MCF 10A (cell line): ENCODE measurements at regions of chr1 and their contacts with region 1.

Region 1: GRCh38 chr1:68120136-68120791 is 69.8 kb upstream of the DIRAS3 start:
- DNase-seq: peak; percentile 71
- H3K4me3 Mint-ChIP-seq: no peak overlapping the region
- H3K27ac Mint-ChIP-seq: no peak overlapping the region
- H3K4me1 Mint-ChIP-seq: peaks cover 5% of the 10 kb centered on the region
- H3K27me3 Mint-ChIP-seq: no peaks in the 10 kb centered on the region
- CTCF ChIP-seq: peak; percentile 82

Region 2: GRCh38 chr1:67889953-67890567 is 230.2 kb before region 1 on chr1:
- CTCF ChIA-PET with region 1: no interaction called
- POLR2A ChIA-PET with region 1: no interaction called
- intact Hi-C with region 1: no loop called
- DNase-seq: peak; percentile 74
- H3K4me3 Mint-ChIP-seq: no peak overlapping the region
- H3K27ac Mint-ChIP-seq: no peak overlapping the region
- H3K4me1 Mint-ChIP-seq: peaks cover 15% of the 10 kb centered on the region
- H3K27me3 Mint-ChIP-seq: no peaks in the 10 kb centered on the region
- CTCF ChIP-seq: no peak

Region 3: DNA sequence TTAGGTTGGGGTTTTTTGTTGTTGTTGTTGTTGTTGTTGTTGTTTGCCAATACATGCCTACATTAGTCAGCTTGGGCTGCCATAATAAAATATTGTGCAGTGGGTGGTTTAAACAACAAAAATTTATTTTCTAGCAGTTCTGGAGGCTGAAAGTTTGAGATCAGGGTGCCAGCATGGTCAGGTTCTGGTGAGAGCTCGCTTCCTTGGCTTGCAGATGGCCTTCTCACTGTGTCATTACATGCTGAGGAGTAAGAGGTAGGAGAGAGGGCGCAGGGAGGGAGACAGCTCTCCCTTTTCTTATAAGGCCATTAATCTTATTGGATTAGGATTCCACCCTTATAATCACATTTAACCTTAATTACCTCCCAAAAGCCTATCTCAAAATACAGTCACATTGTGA is 122.5 kb before region 1 on chr1:
- CTCF ChIA-PET with region 1: no interaction called
- POLR2A ChIA-PET with region 1: no interaction called
- intact Hi-C with region 1: no loop called
- DNase-seq: no peak
- H3K4me3 Mint-ChIP-seq: no peak overlapping the region
- H3K27ac Mint-ChIP-seq: no peak overlapping the region
- H3K4me1 Mint-ChIP-seq: no peaks in the 10 kb centered on the region
- H3K27me3 Mint-ChIP-seq: no peaks in the 10 kb centered on the region
- CTCF ChIP-seq: no peak

Region 4: GRCh38 chr1:68081775-68082283 is 38.4 kb before region 1 on chr1:
- CTCF ChIA-PET with region 1: interaction called, 10 read pairs
- POLR2A ChIA-PET with region 1: no interaction called
- intact Hi-C with region 1: no loop called
- DNase-seq: no peak
- H3K4me3 Mint-ChIP-seq: no peak overlapping the region
- H3K27ac Mint-ChIP-seq: no peak overlapping the region
- H3K4me1 Mint-ChIP-seq: no peaks in the 10 kb centered on the region
- H3K27me3 Mint-ChIP-seq: no peaks in the 10 kb centered on the region
- CTCF ChIP-seq: no peak

Region 5: GRCh38 chr1:68173911-68174737 is 53.9 kb after region 1 on chr1:
- CTCF ChIA-PET with region 1: interaction called, 16 read pairs
- POLR2A ChIA-PET with region 1: no interaction called
- intact Hi-C with region 1: no loop called
- DNase-seq: peak; percentile 95
- H3K4me3 Mint-ChIP-seq: peak overlapping the region; percentile 68
- H3K27ac Mint-ChIP-seq: peak overlapping the region; percentile 92
- H3K4me1 Mint-ChIP-seq: peaks cover 45% of the 10 kb centered on the region
- H3K27me3 Mint-ChIP-seq: no peaks in the 10 kb centered on the region
- CTCF ChIP-seq: no peak

Region 6: GRCh38 chr1:68232354-68233148 is 112.3 kb after region 1 on chr1 and contains the start of gene WLS:
- CTCF ChIA-PET with region 1: interaction called, 20 read pairs
- POLR2A ChIA-PET with region 1: interaction called, 4 read pairs
- intact Hi-C with region 1: loop called (anchors 1 kb)
- DNase-seq: peak; percentile 72
- H3K4me3 Mint-ChIP-seq: peak within 1 kb of the TSS; percentile 91
- H3K27ac Mint-ChIP-seq: peak within 1 kb of the TSS; percentile 42
- H3K4me1 Mint-ChIP-seq: peaks cover 19% of the 10 kb centered on the region
- H3K27me3 Mint-ChIP-seq: no peaks in the 10 kb centered on the region
- CTCF ChIP-seq: no peak
- total RNA-seq, gene WLS: 34.7 and 37.8 TPM in 2 replicates

Region 7: GRCh38 chr1:68384321-68384813 is 264.1 kb after region 1 on chr1:
- CTCF ChIA-PET with region 1: interaction called, 9 read pairs
- POLR2A ChIA-PET with region 1: interaction called, 3 read pairs
- intact Hi-C with region 1: loop called (anchors 1 kb)
- DNase-seq: peak; percentile 98
- H3K4me3 Mint-ChIP-seq: no peak overlapping the region
- H3K27ac Mint-ChIP-seq: peak overlapping the region; percentile 40
- H3K4me1 Mint-ChIP-seq: peaks cover 45% of the 10 kb centered on the region
- H3K27me3 Mint-ChIP-seq: no peaks in the 10 kb centered on the region
- CTCF ChIP-seq: peak; percentile 16

Region 8: GRCh38 chr1:68826836-68827235 is 706.6 kb after region 1 on chr1:
- CTCF ChIA-PET with region 1: no interaction called
- POLR2A ChIA-PET with region 1: no interaction called
- intact Hi-C with region 1: no loop called
- DNase-seq: no peak
- H3K4me3 Mint-ChIP-seq: no peak overlapping the region
- H3K27ac Mint-ChIP-seq: no peak overlapping the region
- H3K4me1 Mint-ChIP-seq: no peaks in the 10 kb centered on the region
- H3K27me3 Mint-ChIP-seq: peaks cover 33% of the 10 kb centered on the region
- CTCF ChIP-seq: no peak

Region 9: DNA sequence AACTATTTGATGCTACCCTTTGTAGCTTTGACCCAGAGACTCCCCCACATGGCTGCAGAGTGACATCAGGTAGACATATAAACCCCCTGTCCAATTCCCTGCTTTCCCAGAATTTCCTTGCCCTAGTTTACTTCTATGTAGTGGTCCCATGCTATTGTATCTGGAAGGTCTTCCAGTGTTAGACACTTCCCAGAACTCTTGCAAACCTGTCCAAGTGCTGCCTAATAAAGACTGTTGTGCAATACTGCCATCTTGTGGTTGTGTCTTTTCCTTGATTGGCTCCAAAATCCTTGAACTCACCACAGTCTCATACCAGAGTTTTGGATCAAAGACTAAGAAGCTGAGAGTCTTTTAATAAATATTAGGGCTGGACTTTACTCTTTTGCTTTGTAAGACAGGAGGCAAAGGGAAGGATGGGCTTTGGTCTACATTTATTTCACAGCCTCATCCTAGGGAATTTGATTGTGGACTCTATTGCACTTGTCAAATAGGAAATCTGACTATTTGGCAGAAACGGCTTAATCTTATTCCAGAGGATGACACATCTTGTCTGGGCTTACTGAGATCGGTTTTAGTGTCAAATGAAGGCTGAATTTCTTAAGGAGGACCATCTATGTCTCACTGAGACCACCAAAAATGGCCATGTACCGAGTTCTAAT is 1617.4 kb after region 1 on chr1:
- CTCF ChIA-PET with region 1: interaction called, 7 read pairs
- POLR2A ChIA-PET with region 1: no interaction called
- intact Hi-C with region 1: loop called (anchors 5 kb)
- DNase-seq: peak; percentile 77
- H3K4me3 Mint-ChIP-seq: no peak overlapping the region
- H3K27ac Mint-ChIP-seq: no peak overlapping the region
- H3K4me1 Mint-ChIP-seq: no peaks in the 10 kb centered on the region
- H3K27me3 Mint-ChIP-seq: peaks cover 87% of the 10 kb centered on the region
- CTCF ChIP-seq: peak; percentile 55